Heart right ventricle (tissue), 16 donors: ENCODE measurements at regions of chr13 and their contacts with region 1.

Region 1: DNA sequence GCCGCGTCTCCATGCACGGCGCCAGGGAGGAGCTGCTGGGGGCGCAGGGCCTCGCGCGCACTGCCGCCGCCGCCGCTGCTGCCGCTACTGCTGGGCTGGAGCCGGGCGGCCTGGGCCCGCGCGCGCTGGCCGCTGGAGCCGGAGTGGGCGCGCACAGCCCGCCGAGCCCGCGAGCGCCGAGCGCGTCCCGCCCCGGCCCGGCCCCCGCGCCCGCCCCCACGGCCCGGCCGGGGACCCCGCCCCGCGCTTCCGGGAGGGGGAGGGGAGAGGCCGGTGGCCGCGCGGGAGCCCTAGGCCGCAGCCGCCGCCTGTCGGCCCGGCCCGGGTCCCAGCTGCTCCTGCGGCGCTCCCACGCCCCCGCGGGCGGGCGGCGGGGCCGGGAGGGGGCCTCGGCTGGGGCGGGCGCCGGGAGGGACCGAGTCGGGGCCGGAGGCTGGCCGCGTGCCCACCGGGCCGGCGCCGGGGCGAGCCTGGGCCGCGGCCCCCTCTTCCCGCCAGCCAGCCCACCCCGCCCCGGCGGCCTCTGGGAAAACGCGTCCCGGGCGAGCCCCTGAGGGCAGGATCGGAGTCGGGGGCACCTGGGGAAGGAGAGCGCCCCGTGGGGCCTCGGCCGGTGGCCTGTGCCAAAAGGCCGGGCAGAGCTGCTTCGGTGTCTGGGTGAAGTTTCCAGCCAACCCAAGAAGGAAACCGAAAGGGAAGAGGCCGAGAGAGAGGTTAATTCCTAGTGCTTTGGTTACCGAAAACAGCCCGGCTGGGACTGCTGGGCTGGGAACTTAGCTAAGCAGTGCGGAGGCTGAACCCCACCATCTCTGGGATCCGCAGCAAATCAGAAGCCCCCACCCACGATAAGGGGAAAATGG is at the start of gene STK24:
- DNase-seq: peak; percentile 69 to 81
- ATAC-seq: peak; percentile 71 to 86 (median 78)
- H3K4me3 ChIP-seq: peak within 1 kb of the TSS; percentile 73 to 99 (median 94)
- H3K27ac ChIP-seq: peak within 1 kb of the TSS; percentile 96 to 99 (median 98)
- H3K4me1 ChIP-seq: peaks cover 7 to 74% (median 39%) of the 10 kb centered on the region in 9 donors
- H3K27me3 ChIP-seq: no peaks in the 10 kb centered on the region
- CTCF ChIP-seq: no peak
- total RNA-seq, gene STK24: 52.0 to 72.9 (median 63.2) TPM

Region 2: DNA sequence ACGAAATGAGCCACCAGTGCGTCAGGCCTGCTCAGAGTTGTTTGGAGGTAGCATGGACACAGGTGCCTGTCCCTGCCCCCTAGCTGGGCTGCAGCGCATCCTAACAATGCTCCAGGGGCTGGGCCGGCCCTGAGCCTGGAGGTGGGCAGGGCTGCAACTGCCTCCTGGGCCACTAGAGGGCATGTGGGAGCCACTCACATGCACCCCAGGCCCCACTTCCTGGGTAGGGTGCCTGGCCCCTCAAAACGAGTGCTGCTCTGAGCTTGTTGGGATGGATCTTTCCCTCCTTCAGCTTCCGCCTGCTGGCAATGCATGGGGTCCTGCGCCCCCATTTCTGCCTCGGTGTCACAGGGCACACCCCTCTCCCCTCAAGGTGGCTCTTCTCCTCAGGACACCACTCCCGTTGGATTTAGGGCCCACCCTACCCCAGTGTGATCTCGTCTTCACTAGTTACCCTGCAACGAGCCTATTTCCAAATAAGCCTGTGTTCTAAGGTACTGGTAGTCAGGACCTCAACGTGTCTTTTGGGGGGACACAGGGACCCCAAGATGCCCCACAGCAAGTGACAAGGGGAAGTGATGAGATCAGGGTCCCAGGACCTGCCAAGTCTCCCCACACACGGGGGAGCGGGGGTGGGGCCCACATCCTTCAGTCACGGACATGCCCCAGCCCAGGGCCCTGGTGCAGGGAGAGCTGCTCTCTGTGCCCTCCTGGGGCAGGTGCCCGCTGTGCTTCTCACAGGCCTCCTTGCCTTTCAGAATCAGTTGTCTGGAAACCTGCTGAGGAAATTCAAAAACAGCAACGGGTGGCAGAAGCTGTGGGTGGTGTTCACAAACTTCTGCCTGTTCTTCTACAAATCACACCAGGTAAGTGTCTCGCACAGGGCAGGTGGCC is 131.6 kb before region 1 on chr13:
- intact Hi-C with region 1: loop called in 7 of 10 experiments (anchors 5 to 10 kb)
- DNase-seq: peak; percentile 60 to 75
- ATAC-seq: peak; percentile 73 to 89 (median 81)
- H3K4me3 ChIP-seq: peak overlapping the region in 1 of 10 donors; percentile 4
- H3K27ac ChIP-seq: peak overlapping the region in 3 of 10 donors; percentile 19 to 46 (median 41)
- H3K4me1 ChIP-seq: peaks cover 4 to 35% (median 28%) of the 10 kb centered on the region in 9 donors
- H3K27me3 ChIP-seq: no peaks in the 10 kb centered on the region
- CTCF ChIP-seq: peak; percentile 90 to 99 (median 97)

Region 3: GRCh38 chr13:98466634-98467236 is 110.5 kb before region 1 on chr13:
- intact Hi-C with region 1: loop called in 3 of 10 experiments (anchors 5 to 10 kb)
- DNase-seq: peak in 1 of 2 donors; percentile 47
- ATAC-seq: peak in 2 of 8 donors; percentile 28 to 38
- H3K4me3 ChIP-seq: no peak overlapping the region
- H3K27ac ChIP-seq: peak overlapping the region in 6 of 10 donors; percentile 40 to 66 (median 57)
- H3K4me1 ChIP-seq: peaks cover 4 to 65% (median 42%) of the 10 kb centered on the region in 9 donors
- H3K27me3 ChIP-seq: no peaks in the 10 kb centered on the region
- CTCF ChIP-seq: peak; percentile 26 to 66 (median 61)

Region 4: DNA sequence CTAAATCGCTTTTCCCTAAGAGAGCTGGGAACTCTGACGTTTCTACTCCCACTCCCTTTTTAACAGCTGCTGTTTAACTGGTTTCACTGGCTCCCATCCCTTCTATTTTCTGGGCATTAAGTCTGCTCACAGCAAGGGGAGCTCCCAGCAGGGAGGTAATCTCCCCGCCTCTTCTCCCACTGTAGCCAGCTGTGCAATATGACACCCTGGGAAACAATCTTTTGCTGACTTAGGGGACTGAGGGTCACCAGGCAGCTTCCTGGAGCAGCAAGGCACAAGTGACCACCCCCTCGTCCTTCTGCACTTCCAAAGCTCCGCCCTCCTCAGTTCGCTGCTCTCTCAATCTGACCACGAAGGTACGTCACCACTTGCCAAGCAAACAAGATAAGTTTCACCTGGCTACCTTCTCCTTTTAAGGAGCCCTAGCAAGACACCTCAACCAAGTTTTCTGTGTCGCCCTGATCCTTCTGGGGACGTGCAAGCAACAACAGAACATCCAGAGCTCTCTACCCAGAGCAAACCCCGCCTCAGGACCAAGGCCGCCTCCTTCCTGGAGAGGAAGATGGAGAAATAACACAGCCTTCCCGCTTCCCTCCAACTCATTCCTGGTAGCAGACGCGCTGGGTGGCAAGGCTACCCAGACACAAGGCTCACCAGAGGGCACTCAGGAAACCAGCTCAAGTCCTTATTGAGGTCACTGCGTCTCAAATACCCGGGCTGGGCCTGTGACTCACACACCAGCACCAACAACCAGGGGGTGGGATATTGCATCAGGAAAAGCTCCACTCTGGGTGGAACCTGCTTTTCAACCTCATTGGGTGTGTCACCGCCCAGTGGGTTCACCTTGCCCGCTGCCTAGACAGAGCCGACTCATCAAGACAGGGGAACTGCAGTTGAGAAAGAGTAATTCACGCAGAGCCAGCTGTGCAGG is 92.6 kb before region 1 on chr13:
- intact Hi-C with region 1: loop called in 5 of 10 experiments (anchors 5 to 10 kb)
- DNase-seq: peak; percentile 37 to 72
- ATAC-seq: peak; percentile 46 to 78 (median 65)
- H3K4me3 ChIP-seq: peak overlapping the region in 1 of 10 donors; percentile 13
- H3K27ac ChIP-seq: peak overlapping the region; percentile 4 to 83 (median 66)
- H3K4me1 ChIP-seq: peaks cover 28 to 99% (median 92%) of the 10 kb centered on the region in 9 donors
- H3K27me3 ChIP-seq: no peaks in the 10 kb centered on the region
- CTCF ChIP-seq: no peak

Region 5: GRCh38 chr13:98641075-98641474 is 63.9 kb after region 1 on chr13:
- intact Hi-C with region 1: loop called in 1 of 10 experiments (anchors 5 kb)
- DNase-seq: no peak
- ATAC-seq: no peak
- H3K4me3 ChIP-seq: no peak overlapping the region
- H3K27ac ChIP-seq: no peak overlapping the region
- H3K4me1 ChIP-seq: no peaks in the 10 kb centered on the region
- H3K27me3 ChIP-seq: peaks cover 0 to 3% (median 0%) of the 10 kb centered on the region in 7 donors
- CTCF ChIP-seq: no peak

Region 6: GRCh38 chr13:98900442-98900841 is 323.2 kb after region 1 on chr13:
- intact Hi-C with region 1: no loop called
- DNase-seq: no peak
- ATAC-seq: no peak
- H3K4me3 ChIP-seq: no peak overlapping the region
- H3K27ac ChIP-seq: no peak overlapping the region
- H3K4me1 ChIP-seq: peaks cover 0 to 10% (median 0%) of the 10 kb centered on the region in 9 donors
- H3K27me3 ChIP-seq: no peaks in the 10 kb centered on the region
- CTCF ChIP-seq: no peak